Common myeloid progenitor, CD34-positive (primary cell): ENCODE measurements at regions of chr1 and their contacts with region 1.

Region 1: GRCh38 chr1:214261206-214262123 is 19.5 kb upstream of the SMYD2 start:
- DNase-seq: peak; percentile 65 to 74 (median 70)
- H3K4me3 ChIP-seq: peak overlapping the region in 2 of 7 experiments; percentile 16 to 30
- H3K27ac ChIP-seq: no peak overlapping the region
- H3K4me1 ChIP-seq: peaks cover 0 to 4% (median 0%) of the 10 kb centered on the region in 4 experiments
- H3K27me3 ChIP-seq: peaks cover 0 to 29% (median 12%) of the 10 kb centered on the region in 5 experiments

Region 2: DNA sequence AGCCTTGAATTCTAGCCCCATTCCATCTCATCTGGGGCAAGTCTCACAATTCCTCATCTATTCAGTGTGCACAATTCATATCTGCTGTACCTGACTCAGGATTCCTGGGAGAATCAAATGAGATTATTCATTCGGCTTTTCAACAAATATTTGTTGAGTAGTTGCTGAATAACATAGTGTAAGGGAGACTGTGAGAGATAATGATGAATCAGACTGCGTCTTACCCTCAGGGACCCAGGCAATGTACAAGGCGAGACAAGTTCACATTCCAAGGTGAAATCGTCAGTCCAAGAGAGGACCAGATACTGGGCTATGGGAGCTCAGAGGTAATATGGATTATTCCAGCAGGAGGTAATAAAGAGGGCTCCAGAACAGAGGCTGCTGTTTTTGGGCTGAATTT is 48.3 kb before region 1 on chr1:
- CTCF ChIA-PET with region 1: interaction called, 14 read pairs
- POLR2A ChIA-PET with region 1: no interaction called
- DNase-seq: no peak
- H3K4me3 ChIP-seq: no peak overlapping the region
- H3K27ac ChIP-seq: no peak overlapping the region
- H3K4me1 ChIP-seq: peaks cover 0 to 6% (median 5%) of the 10 kb centered on the region in 4 experiments
- H3K27me3 ChIP-seq: peaks cover 0 to 12% (median 6%) of the 10 kb centered on the region in 5 experiments

Region 3: DNA sequence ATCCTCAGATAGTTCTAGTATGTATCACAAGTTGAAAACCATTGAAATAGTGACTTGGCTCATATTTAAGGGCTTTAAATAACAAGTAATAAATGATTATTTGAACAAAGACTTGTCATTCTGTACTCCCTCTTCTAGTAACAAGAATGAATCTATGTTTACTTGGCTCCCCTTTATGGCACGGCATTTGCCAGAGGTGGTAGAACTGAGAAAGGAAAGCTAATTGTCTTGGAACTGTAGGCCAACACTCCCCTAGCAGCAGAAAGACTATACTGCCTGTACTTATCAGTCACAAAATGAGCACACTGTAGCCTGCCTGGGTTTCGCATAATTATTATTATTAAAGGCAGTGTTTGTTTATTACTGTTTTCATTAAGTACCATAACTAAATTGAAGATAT is 10.1 kb before region 1 on chr1:
- CTCF ChIA-PET with region 1: interaction called, 21 read pairs
- POLR2A ChIA-PET with region 1: no interaction called
- DNase-seq: no peak
- H3K4me3 ChIP-seq: no peak overlapping the region
- H3K27ac ChIP-seq: no peak overlapping the region
- H3K4me1 ChIP-seq: no peaks in the 10 kb centered on the region
- H3K27me3 ChIP-seq: peaks cover 0 to 5% (median 0%) of the 10 kb centered on the region in 5 experiments

Region 4: GRCh38 chr1:214292322-214292721 is 30.9 kb after region 1 on chr1:
- CTCF ChIA-PET with region 1: interaction called, 12 read pairs
- POLR2A ChIA-PET with region 1: no interaction called
- DNase-seq: no peak
- H3K4me3 ChIP-seq: no peak overlapping the region
- H3K27ac ChIP-seq: no peak overlapping the region
- H3K4me1 ChIP-seq: peaks cover 0 to 6% (median 2%) of the 10 kb centered on the region in 4 experiments
- H3K27me3 ChIP-seq: no peaks in the 10 kb centered on the region

Region 5: GRCh38 chr1:214422137-214422671 is 160.7 kb after region 1 on chr1:
- CTCF ChIA-PET with region 1: no interaction called
- POLR2A ChIA-PET with region 1: no interaction called
- DNase-seq: no peak
- H3K4me3 ChIP-seq: no peak overlapping the region
- H3K27ac ChIP-seq: no peak overlapping the region
- H3K4me1 ChIP-seq: peaks cover 4 to 24% (median 11%) of the 10 kb centered on the region in 4 experiments
- H3K27me3 ChIP-seq: no peaks in the 10 kb centered on the region

Region 6: DNA sequence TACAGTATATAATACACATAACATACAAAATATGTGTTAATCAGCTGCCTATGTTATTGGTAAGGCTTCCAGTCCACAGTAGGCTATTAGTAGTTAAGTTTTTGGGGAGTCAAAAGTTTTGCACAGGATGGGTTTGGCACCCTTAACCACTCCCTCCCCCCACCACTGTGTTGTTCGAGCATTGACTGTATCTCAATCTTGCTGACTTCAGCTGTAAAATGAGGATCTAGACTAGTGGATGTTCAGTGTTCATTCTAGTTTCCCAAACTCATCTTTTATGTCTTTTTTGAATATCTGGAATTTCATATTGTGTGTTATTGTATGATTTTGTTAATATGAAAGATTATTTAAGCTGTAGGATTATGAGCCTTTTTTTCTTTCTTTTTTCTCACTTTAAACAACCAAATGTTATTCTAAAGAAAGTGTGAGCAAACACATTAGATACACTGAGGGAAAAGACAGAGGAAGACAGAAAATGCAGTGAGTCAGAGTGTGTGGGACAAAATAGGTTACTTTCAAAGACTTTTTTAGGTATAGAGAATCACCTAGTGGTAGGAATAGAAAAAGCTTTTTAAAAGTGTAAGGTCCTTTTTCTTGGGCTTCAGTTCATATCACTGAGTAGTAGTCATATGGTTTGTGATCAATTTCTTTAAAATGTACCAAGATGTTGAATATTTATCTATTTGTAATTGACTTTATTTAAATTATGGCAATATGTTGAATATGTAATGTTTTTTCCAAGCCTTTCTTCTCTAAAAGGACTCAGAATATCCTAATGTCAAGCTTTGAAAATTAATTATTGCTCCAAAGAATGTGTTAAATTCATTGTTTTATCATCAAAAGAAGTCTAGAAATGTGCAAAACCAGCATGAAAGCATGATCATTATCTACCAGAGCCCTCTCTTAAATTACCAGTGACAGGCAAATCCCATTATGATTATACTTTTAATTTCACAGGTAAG is 323.6 kb after region 1 on chr1:
- CTCF ChIA-PET with region 1: interaction called, 12 read pairs
- POLR2A ChIA-PET with region 1: no interaction called
- DNase-seq: peak; percentile 20 to 51 (median 49)
- H3K4me3 ChIP-seq: no peak overlapping the region
- H3K27ac ChIP-seq: no peak overlapping the region
- H3K4me1 ChIP-seq: peaks cover 0 to 6% (median 2%) of the 10 kb centered on the region in 4 experiments
- H3K27me3 ChIP-seq: no peaks in the 10 kb centered on the region